ENCODE measurements at regions of chr13 and their contacts with region 1.

Region 1: DNA sequence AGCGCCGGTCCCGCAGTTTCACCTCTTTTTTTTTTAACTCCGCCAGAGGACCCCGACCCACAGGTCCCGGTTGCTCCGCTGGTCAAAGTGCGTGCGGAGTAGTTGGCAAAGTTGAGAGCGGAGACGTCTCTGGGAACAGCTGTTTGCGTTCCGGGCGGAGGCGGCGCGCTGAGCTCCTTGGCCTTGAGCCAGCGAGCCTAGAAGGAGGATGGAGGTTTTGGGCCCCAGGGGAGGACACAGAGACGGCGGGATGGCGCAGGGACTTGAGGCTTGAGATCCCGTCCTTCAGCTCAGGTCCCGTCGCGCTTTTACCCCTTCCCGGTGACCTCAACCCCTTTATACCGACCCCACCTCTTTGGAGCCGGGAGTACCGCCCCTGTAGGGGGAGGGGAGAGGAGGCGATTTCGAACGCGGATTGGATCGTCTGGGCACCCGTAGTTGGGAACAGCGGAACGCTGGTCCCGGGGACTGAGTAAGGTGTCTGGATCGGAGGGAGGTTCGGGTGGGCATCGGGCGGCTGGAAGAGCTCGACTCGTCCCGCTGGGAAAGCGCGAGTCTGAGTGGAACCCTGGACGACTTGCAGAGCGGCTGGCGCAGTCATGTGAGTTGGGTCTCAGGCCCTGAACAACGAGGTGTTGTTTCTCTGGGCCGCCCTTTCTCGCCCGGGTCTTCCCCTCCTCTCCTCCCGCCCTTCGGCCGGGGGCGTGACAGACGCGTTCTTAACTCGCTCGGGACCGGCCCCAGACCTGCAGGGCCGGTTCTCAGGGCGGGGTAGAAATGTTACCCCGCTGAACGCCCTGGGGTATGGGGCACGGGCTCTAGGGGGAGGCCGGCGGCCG is at the start of gene WBP4:
- DNase-seq: peak; percentile 87 to 94
- H3K4me3 ChIP-seq: peak within 1 kb of the TSS; percentile 82
- H3K4me1 ChIP-seq: peaks cover 37% of the 10 kb centered on the region
- H3K27me3 ChIP-seq: no peaks in the 10 kb centered on the region

Region 2: GRCh38 chr13:41310963-41311606 is 249.8 kb after region 1 on chr13 and contains the start of gene NAA16:
- in situ Hi-C with region 1: loop called (anchors 10 kb)
- DNase-seq: peak; percentile 80 to 96
- H3K4me3 ChIP-seq: peak within 1 kb of the TSS; percentile 94
- H3K4me1 ChIP-seq: peaks cover 10% of the 10 kb centered on the region
- H3K27me3 ChIP-seq: no peaks in the 10 kb centered on the region